PC-9 (cell line): ENCODE measurements at regions of chr6 and their contacts with region 1.

Region 1: GRCh38 chr6:129130106-129130505 is 247.2 kb downstream of the LAMA2 start:
- DNase-seq: no peak
- H3K4me3 ChIP-seq: no peak overlapping the region
- H3K27ac ChIP-seq: no peak overlapping the region
- H3K4me1 ChIP-seq: no peaks in the 10 kb centered on the region
- H3K27me3 ChIP-seq: no peaks in the 10 kb centered on the region
- CTCF ChIP-seq: no peak

Region 2: GRCh38 chr6:128767705-128768104 is 362.4 kb before region 1 on chr6:
- CTCF ChIA-PET with region 1: no interaction called
- POLR2A ChIA-PET with region 1: no interaction called
- intact Hi-C with region 1: no loop called
- DNase-seq: no peak
- H3K4me3 ChIP-seq: no peak overlapping the region
- H3K27ac ChIP-seq: no peak overlapping the region
- H3K4me1 ChIP-seq: no peaks in the 10 kb centered on the region
- H3K27me3 ChIP-seq: no peaks in the 10 kb centered on the region
- CTCF ChIP-seq: no peak

Region 3: GRCh38 chr6:129350278-129350677 is 220.2 kb after region 1 on chr6:
- CTCF ChIA-PET with region 1: interaction called, 10 read pairs
- POLR2A ChIA-PET with region 1: no interaction called
- intact Hi-C with region 1: no loop called
- DNase-seq: no peak
- H3K4me3 ChIP-seq: no peak overlapping the region
- H3K27ac ChIP-seq: no peak overlapping the region
- H3K4me1 ChIP-seq: no peaks in the 10 kb centered on the region
- H3K27me3 ChIP-seq: no peaks in the 10 kb centered on the region
- CTCF ChIP-seq: no peak

Region 4: GRCh38 chr6:130655586-130655985 is 1525.5 kb after region 1 on chr6:
- CTCF ChIA-PET with region 1: no interaction called
- POLR2A ChIA-PET with region 1: no interaction called
- intact Hi-C with region 1: no loop called
- DNase-seq: no peak
- H3K4me3 ChIP-seq: no peak overlapping the region
- H3K27ac ChIP-seq: no peak overlapping the region
- H3K4me1 ChIP-seq: no peaks in the 10 kb centered on the region
- H3K27me3 ChIP-seq: no peaks in the 10 kb centered on the region
- CTCF ChIP-seq: no peak